Caco-2 (cell line): ENCODE measurements at regions of chr5 and their contacts with region 1.

Region 1: GRCh38 chr5:167261309-167262100 is 1029.9 kb upstream of the WWC1 start:
- DNase-seq: peak in 1 of 2 experiments; percentile 9
- H3K4me3 ChIP-seq: no peak overlapping the region
- H3K4me3 Mint-ChIP-seq: no peak overlapping the region
- H3K27ac Mint-ChIP-seq: no peak overlapping the region
- H3K4me1 ChIP-seq: no peaks in the 10 kb centered on the region
- H3K4me1 Mint-ChIP-seq: no peaks in the 10 kb centered on the region
- H3K27me3 ChIP-seq: no peaks in the 10 kb centered on the region
- H3K27me3 Mint-ChIP-seq: peaks cover 6% of the 10 kb centered on the region
- CTCF ChIP-seq: peak in 1 of 2 experiments; percentile 39

Region 2: DNA sequence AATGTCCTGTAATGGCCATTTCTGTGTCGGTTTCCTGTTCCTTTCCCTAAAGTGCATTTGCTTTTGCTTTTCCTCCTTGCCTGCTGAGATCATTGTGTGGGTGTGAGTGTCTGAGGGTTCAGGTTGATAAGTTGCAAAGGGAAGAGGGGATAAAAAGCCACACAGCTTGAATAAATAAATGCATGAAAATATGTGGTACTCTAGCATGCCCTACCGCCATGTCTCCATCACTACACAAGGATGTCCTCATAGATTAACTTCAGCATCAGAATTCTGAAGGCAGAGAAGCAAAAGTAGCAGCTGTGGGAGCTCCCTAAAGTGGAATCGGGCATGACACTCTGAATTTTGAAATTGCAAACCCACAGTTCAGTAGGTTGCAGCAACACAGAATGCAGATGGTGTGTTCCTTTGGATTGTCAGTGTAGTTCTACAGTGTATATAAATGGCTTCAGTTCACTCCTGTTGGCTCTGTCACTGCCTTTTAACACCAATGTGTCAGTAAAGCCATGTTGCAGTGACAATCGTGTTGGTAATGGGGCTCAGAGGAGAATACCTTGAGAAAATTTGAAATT is 56.3 kb after region 1 on chr5:
- CTCF ChIA-PET with region 1: no interaction called
- POLR2A ChIA-PET with region 1: no interaction called
- intact Hi-C with region 1: loop called (anchors 2 kb)
- DNase-seq: no peak
- H3K4me3 ChIP-seq: no peak overlapping the region
- H3K4me3 Mint-ChIP-seq: no peak overlapping the region
- H3K27ac Mint-ChIP-seq: no peak overlapping the region
- H3K4me1 ChIP-seq: no peaks in the 10 kb centered on the region
- H3K4me1 Mint-ChIP-seq: no peaks in the 10 kb centered on the region
- H3K27me3 ChIP-seq: no peaks in the 10 kb centered on the region
- H3K27me3 Mint-ChIP-seq: peaks cover 9% of the 10 kb centered on the region
- CTCF ChIP-seq: no peak

Region 3: DNA sequence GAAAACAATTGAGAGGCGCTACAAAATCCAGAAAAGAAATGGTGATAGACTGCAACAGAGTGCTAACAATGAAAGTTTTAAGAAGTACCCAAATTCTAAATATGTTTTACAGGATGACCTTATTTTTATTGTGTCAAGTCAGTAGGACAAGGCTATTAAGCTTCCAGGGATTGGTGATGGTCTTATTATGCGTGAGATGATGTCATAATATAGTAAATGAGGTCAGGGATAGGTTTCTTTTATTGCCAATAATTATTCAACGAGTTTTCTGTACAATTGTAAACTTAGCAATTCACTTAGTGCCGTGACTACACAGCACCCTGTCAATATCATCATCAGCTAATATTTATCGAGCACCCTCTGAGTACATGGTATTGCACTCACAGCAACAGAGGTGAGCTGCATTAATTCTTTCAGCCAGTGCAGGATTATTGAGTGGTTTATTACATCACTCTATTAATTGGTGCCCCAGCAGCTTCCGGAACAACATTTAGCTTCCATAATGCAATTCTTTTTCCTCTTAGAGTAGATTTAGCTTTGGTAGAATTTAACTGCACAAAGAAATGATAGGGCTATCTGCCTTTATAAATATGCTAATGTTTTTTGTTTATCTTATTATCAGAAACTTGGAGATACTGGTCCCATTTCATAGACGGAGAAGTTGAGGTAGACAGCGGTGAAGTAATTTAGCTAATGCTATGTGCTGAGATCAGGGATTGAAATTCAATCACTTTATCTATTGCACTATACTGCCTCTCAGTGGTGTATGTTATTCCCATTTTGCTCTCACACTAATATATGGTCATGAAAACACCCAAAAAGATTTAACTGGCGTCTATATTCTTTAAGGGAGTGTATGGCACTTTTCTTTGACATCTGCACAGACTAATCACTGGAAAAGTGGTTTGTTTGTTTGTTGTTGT is 303.8 kb after region 1 on chr5:
- CTCF ChIA-PET with region 1: no interaction called
- POLR2A ChIA-PET with region 1: no interaction called
- intact Hi-C with region 1: loop called (anchors 5 kb)
- DNase-seq: no peak
- H3K4me3 ChIP-seq: no peak overlapping the region
- H3K4me3 Mint-ChIP-seq: no peak overlapping the region
- H3K27ac Mint-ChIP-seq: no peak overlapping the region
- H3K4me1 ChIP-seq: no peaks in the 10 kb centered on the region
- H3K4me1 Mint-ChIP-seq: no peaks in the 10 kb centered on the region
- H3K27me3 ChIP-seq: no peaks in the 10 kb centered on the region
- H3K27me3 Mint-ChIP-seq: peaks cover 36% of the 10 kb centered on the region
- CTCF ChIP-seq: no peak